CD4-positive, alpha-beta memory T cell (primary cell): ENCODE measurements at regions of chr14 and their contacts with region 1.

Region 1: DNA sequence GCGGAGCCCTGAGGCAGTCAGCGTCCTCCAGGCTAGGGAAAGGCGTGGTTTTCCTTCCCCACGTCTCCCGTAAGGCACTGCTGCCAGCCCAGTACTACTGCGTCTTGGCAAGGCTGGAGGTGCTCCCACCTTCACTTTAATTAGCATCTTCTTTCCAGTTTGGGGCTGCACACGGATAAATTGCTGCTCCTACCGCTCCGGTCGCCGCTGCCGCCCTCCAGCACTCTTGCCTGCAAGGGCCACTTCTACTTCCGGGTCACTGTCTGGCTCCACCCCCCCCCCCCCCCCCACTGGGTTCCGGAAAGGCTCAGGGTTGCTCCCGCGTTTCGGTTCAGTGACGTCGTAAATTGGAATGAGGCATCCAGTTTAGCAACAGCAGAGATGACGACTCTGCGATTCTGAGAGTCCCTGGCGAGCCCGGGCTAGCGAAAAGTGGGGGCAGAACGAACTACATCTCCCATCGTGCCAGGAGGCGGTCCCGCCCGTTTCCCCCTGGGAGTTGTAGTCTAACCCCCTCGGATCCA is at the start of gene NEDD8:
- DNase-seq: peak; percentile 89 to 96 (median 89)
- H3K4me3 ChIP-seq: peak within 1 kb of the TSS; percentile 100
- H3K4me3 Mint-ChIP-seq: peak within 1 kb of the TSS; percentile 97 to 99 (median 98)
- H3K27ac ChIP-seq: peak within 1 kb of the TSS; percentile 88
- H3K27ac Mint-ChIP-seq: peak within 1 kb of the TSS; percentile 95 to 99 (median 97)
- H3K4me1 ChIP-seq: peaks cover 41% of the 10 kb centered on the region
- H3K4me1 Mint-ChIP-seq: peaks cover 41 to 68% (median 54%) of the 10 kb centered on the region in 4 donors
- H3K27me3 ChIP-seq: no peaks in the 10 kb centered on the region
- H3K27me3 Mint-ChIP-seq: no peaks in the 10 kb centered on the region
- total RNA-seq, gene NEDD8: 116 to 127 TPM

Region 2: GRCh38 chr14:24141097-24141880 is 90.9 kb before region 1 on chr14 and contains the start of gene EMC9:
- CTCF ChIA-PET with region 1: no interaction called
- POLR2A ChIA-PET with region 1: interaction called, 6 read pairs
- intact Hi-C with region 1: loop called (anchors 2 kb)
- DNase-seq: peak; percentile 98 to 100 (median 99)
- H3K4me3 ChIP-seq: peak within 1 kb of the TSS; percentile 83 to 91
- H3K4me3 Mint-ChIP-seq: peak within 1 kb of the TSS; percentile 85 to 97 (median 94)
- H3K27ac ChIP-seq: peak within 1 kb of the TSS; percentile 77
- H3K27ac Mint-ChIP-seq: peak within 1 kb of the TSS; percentile 76 to 95 (median 94)
- H3K4me1 ChIP-seq: peaks cover 74% of the 10 kb centered on the region
- H3K4me1 Mint-ChIP-seq: peaks cover 38 to 94% (median 61%) of the 10 kb centered on the region in 4 donors
- H3K27me3 ChIP-seq: no peaks in the 10 kb centered on the region
- H3K27me3 Mint-ChIP-seq: no peaks in the 10 kb centered on the region
- total RNA-seq, gene EMC9: 33.0 to 33.9 TPM

Region 3: DNA sequence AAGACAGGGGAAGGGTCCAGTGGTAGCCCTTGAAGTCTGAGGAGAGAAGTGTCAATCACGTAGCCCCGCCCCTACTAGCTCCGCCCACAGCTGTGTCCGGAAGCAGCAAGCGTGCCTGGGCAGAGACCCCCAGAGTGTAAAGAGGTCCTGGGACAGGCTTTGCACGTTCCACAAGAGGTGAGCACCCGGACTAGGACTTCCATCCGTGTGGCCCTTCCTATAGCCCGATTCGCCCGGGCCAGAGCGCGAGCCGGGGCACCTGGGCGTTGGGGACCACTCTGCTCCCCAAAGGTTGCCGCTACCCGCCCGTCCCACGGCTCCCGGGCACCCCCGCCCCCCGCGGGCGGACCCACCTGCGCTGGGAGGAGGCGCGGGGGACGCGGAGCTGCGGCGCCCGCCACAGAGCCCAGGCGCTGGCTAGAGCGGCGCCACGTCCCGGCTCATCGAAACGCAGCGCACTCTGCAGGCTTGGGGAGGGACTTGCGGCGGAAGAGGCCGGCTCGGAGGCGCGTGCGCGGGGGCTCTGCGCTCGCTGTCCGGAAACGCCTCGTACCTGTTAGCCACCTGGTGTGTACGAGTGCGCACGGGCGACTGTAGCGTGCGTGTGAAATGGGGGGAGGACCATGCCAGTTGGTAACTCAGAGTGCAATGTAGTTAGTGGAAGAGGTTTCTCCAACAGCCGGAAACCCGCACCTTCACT is 39.1 kb after region 1 on chr14 and contains the start of gene RABGGTA:
- CTCF ChIA-PET with region 1: no interaction called
- POLR2A ChIA-PET with region 1: interaction called, 30 read pairs
- intact Hi-C with region 1: loop called (anchors 1 kb)
- DNase-seq: peak; percentile 95 to 98 (median 97)
- H3K4me3 ChIP-seq: peak within 1 kb of the TSS; percentile 86 to 91
- H3K4me3 Mint-ChIP-seq: peak within 1 kb of the TSS; percentile 90 to 95 (median 91)
- H3K27ac ChIP-seq: peak within 1 kb of the TSS; percentile 94
- H3K27ac Mint-ChIP-seq: peak within 1 kb of the TSS; percentile 91 to 100 (median 99)
- H3K4me1 ChIP-seq: peaks cover 33% of the 10 kb centered on the region
- H3K4me1 Mint-ChIP-seq: peaks cover 24 to 46% (median 39%) of the 10 kb centered on the region in 4 donors
- H3K27me3 ChIP-seq: no peaks in the 10 kb centered on the region
- H3K27me3 Mint-ChIP-seq: no peaks in the 10 kb centered on the region
- total RNA-seq, gene RABGGTA: 55.6 to 62.5 TPM